ENCODE measurements at regions of chr6 and their contacts with region 1.

Region 1: DNA sequence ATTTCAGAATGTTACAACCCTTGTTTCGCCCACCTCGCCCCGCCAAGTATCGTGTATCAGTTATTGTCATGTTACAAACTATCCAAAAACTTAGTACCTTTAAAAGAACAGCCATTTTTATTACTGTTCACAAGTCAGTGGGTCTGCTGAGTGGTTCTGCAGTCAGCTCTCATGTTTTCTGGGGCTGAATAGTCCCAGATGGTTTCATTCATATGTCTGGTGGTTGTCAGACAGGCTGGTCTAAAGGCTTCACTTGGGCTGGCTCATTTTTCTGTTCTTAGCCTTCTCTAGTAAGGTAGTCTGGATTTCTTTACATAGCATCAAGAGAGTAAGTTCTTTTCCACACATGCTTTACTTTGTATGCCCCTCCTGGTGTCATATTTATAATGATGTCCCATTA is 8.6 kb downstream of the ZNF292 start:
- DNase-seq: no peak

Region 2: GRCh38 chr6:87196344-87196743 is 32.3 kb after region 1 on chr6:
- intact Hi-C with region 1: loop called in 1 of 2 experiments (anchors 1 kb)
- DNase-seq: no peak

Region 3: DNA sequence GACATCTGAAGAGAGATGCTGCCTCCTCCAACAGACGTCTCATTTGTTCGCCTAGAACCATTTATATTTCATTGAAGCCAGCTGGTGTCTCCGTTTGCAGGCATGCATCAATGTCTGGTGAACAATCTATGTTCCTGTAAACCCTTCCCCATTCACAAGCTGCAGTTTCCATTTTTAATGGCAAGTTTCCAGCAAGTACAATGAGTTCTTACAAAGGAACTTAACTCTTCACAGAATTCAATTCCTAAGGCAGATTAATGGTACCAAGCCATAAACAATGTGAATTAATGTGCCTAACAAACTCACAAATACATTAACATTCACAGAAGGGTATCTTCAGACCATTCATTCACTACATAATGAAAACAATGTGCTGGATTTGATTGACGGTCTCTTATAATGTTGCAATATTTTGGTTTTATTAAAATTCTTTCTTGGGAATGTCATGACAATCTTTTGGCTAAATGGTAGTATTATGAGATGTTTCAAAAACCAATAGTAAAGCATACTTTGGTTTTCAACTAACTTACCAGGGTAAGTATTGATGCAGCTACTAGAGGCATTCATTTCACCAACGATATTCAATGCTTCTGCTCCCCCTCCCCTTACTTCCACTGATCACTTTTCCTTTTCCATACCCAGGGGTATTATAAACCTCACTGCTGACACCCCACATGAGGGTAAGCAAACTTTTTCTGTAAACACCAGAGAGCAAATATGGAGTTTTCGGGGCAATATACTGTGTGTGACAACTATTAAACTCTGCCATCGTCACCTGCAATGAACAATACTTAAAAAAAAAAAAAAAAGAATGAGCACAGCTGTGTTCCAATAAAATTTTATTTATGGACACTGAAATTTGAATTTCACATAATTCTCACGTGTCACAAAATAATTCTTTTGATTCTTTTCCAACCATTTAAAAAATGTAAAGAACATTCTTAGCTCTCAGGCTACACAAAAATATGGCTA is 533.9 kb after region 1 on chr6:
- intact Hi-C with region 1: no loop called
- DNase-seq: no peak